Adrenal gland (tissue), 19 donors: ENCODE measurements at regions of chr6 and their contacts with region 1.

Region 1: GRCh38 chr6:154805288-154805911 is 72.2 kb downstream of the SCAF8 start:
- DNase-seq: peak in 1 of 7 donors; percentile 24
- H3K4me3 ChIP-seq: no peak overlapping the region
- H3K27ac ChIP-seq: no peak overlapping the region
- H3K4me1 ChIP-seq: peaks cover 0 to 8% of the 10 kb centered on the region in 2 donors
- H3K27me3 ChIP-seq: no peaks in the 10 kb centered on the region
- CTCF ChIP-seq: peak; percentile 21 to 85 (median 64)
- POLR2A ChIP-seq: no peak

Region 2: DNA sequence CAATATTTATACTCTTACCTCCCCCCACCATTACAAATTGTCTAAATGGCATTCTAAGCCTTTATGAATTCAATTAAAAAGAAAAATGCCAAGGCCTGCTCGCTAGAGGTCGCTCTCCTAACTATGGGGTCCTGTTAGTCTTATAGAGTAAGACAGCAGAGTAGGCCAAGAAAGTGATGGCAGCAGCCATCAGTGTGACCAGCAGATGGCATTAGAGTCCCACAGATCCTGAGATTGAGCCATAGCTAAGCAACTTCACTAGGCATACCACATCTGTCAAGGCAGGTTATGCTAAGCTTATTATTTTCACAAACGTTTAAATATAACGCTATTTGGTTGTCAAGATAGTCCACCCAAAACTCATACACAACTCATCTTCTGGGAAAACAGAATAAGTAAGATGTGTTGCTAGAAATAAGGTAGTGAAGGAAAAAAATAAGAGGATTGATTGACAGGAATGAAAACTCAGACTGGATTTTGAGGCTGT is 129.8 kb before region 1 on chr6:
- intact Hi-C with region 1: loop called (anchors 5 kb)
- DNase-seq: peak; percentile 86 to 98 (median 90)
- H3K4me3 ChIP-seq: no peak overlapping the region
- H3K27ac ChIP-seq: no peak overlapping the region
- H3K4me1 ChIP-seq: no peaks in the 10 kb centered on the region
- H3K27me3 ChIP-seq: no peaks in the 10 kb centered on the region
- CTCF ChIP-seq: peak; percentile 97 to 100 (median 100)
- POLR2A ChIP-seq: no peak

Region 3: DNA sequence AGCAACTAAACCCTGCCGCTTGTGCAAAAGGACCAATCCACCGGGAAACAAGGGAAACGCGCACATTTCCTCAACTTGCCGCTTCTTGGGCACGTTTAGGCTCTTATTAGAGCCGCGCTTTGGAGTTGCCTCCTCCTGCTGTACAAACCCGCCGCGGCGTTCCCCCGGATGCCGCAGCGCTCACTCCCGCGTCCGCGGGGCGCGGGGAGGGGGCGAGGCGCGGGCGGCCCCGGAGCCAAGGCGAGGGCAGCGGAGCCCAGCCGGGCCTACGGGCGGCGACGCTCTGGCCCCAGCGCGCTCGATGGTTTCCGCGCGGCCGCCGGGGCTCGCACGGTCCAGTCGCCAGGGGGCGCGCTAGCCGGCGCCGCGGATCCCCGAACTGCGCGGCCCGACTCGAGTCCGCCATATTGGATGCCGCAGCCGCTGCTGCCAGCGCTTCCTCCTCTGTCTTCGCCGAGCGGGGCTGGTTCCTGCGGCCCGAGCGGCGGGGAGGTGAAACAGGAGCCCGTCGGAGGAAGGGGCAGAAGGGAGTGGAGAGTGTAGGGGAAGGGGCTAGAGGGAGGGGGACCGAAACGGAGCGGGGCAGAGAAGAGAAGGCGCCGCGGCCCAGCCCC is 72.3 kb before region 1 on chr6 and contains the start of gene SCAF8:
- intact Hi-C with region 1: loop called (anchors 2 to 10 kb)
- DNase-seq: peak; percentile 72 to 86 (median 81)
- H3K4me3 ChIP-seq: peak within 1 kb of the TSS; percentile 40 to 100 (median 92)
- H3K27ac ChIP-seq: peak within 1 kb of the TSS; percentile 96 to 100 (median 99)
- H3K4me1 ChIP-seq: peaks cover 14 to 43% of the 10 kb centered on the region in 2 donors
- H3K27me3 ChIP-seq: no peaks in the 10 kb centered on the region
- CTCF ChIP-seq: peak; percentile 13 to 97 (median 70)
- POLR2A ChIP-seq: peak; percentile 31 to 42
- total RNA-seq, gene SCAF8: 25.6 to 41.5 (median 39.4) TPM